ENCODE measurements at regions of chr19 and their contacts with region 1.

Region 1: GRCh38 chr19:38929929-38930775 is at the start of gene SARS2:
- DNase-seq: peak; percentile 93
- ATAC-seq: peak; percentile 71
- H3K4me3 Mint-ChIP-seq: peak within 1 kb of the TSS; percentile 97
- H3K27ac Mint-ChIP-seq: peak within 1 kb of the TSS; percentile 98
- H3K4me1 Mint-ChIP-seq: peaks cover 34% of the 10 kb centered on the region
- H3K27me3 Mint-ChIP-seq: no peaks in the 10 kb centered on the region
- CTCF ChIP-seq: peak; percentile 100
- total RNA-seq, gene SARS2: 46.4 and 50.9 TPM in 2 replicates

Region 2: GRCh38 chr19:38374429-38375176 is 555.5 kb before region 1 on chr19 and contains the start of gene PSMD8:
- CTCF ChIA-PET with region 1: no interaction called
- POLR2A ChIA-PET with region 1: interaction called, 8 read pairs
- intact Hi-C with region 1: loop called (anchors 1 kb)
- DNase-seq: peak; percentile 96
- ATAC-seq: peak; percentile 96
- H3K4me3 Mint-ChIP-seq: peak within 1 kb of the TSS; percentile 100
- H3K27ac Mint-ChIP-seq: peak within 1 kb of the TSS; percentile 96
- H3K4me1 Mint-ChIP-seq: peaks cover 25% of the 10 kb centered on the region
- H3K27me3 Mint-ChIP-seq: no peaks in the 10 kb centered on the region
- CTCF ChIP-seq: no peak
- total RNA-seq, gene PSMD8: 134 and 138 TPM in 2 replicates

Region 3: GRCh38 chr19:38618590-38619360 is 311.4 kb before region 1 on chr19 and contains the start of gene EIF3K:
- CTCF ChIA-PET with region 1: interaction called, 4 read pairs
- POLR2A ChIA-PET with region 1: interaction called, 13 read pairs
- intact Hi-C with region 1: loop called (anchors 1 kb)
- DNase-seq: peak; percentile 97
- ATAC-seq: peak; percentile 28
- H3K4me3 Mint-ChIP-seq: peak within 1 kb of the TSS; percentile 100
- H3K27ac Mint-ChIP-seq: peak within 1 kb of the TSS; percentile 97
- H3K4me1 Mint-ChIP-seq: peaks cover 53% of the 10 kb centered on the region
- H3K27me3 Mint-ChIP-seq: no peaks in the 10 kb centered on the region
- CTCF ChIP-seq: no peak
- total RNA-seq, gene EIF3K: 344 and 385 TPM in 2 replicates

Region 4: DNA sequence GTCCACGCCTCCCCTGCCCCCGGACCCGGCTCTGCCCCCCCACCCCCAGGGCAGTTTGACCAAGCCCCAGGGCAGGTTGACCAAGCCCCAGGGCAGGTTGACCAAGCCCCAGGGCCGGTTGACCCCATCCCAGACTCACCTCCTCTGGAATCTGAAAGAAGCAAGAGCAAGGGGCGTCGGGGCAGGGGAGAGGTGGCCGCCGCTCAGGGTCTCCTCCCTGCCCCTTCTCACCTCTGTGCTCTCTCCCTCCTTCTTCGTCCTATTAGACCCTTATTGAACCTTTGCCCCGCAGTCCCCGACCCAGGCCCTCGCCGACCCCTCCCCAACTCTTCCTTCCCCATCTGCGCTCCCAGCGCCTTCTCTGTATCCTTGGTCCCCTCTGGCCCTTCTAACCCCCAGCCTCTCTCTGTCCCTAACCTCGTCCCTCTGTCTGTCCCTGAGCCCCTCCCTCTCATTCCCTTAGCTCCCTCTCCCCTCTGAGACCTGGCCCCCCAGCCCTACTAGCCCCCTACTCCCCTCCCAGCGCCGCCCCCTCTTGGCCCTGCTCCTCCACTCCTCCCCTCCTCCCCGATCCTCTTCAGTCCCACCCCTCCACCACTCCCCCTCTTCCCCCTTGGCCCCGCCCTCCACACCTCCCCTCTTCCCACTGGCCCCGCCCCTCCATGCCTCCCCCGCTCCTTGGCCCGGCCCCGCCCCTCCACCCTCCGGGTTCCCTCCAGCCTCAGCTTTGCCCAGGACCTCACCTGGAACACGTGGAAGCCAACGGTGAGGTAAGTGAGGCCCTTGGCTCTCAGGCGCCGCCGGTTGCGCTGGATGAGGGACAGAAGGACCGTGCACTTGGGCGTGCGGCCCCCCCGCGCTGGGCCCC is 193.5 kb before region 1 on chr19:
- CTCF ChIA-PET with region 1: interaction called, 25 read pairs
- POLR2A ChIA-PET with region 1: interaction called, 16 read pairs
- intact Hi-C with region 1: loop called (anchors 1 kb)
- DNase-seq: peak; percentile 64
- ATAC-seq: peak; percentile 60
- H3K4me3 Mint-ChIP-seq: peak overlapping the region; percentile 71
- H3K27ac Mint-ChIP-seq: peak overlapping the region; percentile 12
- H3K4me1 Mint-ChIP-seq: peaks cover 38% of the 10 kb centered on the region
- H3K27me3 Mint-ChIP-seq: no peaks in the 10 kb centered on the region
- CTCF ChIP-seq: no peak

Region 5: DNA sequence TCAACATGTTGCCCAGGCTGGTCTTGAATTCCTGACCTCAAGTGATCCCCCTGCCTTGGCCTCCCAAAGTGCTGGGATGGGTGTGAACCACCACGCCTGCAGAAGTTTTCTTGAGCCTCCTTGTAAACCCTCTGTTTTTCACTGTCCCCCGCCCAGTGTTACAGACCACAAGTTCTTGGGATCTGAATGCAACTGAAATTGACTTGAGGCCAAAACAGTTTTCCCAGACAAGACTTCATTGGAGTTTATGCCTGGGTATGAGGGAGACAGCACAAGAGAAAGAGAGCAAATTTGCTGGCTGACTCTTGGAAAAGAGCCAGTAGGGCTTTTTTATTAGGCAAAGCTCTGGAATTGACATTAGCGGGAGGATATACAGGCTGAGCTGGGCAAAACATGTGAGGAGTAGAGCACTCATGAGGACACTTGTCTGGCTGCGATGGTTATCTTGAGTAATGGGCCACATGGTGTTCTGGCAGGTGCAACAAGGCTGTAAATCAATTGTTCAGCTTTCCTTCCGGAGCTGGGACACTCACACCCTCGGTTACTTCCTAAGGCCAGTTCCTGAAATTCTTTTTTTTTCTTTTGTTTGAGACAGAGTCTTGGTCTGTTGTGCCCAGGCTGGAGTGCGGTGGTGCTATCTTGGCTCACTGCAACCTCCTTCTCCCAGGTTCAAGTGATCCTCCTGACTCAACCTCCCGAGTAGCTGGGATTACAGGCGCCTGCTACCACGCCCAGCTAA is 67.7 kb before region 1 on chr19:
- CTCF ChIA-PET with region 1: interaction called, 3 read pairs
- POLR2A ChIA-PET with region 1: interaction called, 12 read pairs
- intact Hi-C with region 1: no loop called
- DNase-seq: no peak
- ATAC-seq: no peak
- H3K4me3 Mint-ChIP-seq: peak overlapping the region; percentile 38
- H3K27ac Mint-ChIP-seq: peak overlapping the region; percentile 75
- H3K4me1 Mint-ChIP-seq: peaks cover 79% of the 10 kb centered on the region
- H3K27me3 Mint-ChIP-seq: no peaks in the 10 kb centered on the region
- CTCF ChIP-seq: no peak

Region 6: DNA sequence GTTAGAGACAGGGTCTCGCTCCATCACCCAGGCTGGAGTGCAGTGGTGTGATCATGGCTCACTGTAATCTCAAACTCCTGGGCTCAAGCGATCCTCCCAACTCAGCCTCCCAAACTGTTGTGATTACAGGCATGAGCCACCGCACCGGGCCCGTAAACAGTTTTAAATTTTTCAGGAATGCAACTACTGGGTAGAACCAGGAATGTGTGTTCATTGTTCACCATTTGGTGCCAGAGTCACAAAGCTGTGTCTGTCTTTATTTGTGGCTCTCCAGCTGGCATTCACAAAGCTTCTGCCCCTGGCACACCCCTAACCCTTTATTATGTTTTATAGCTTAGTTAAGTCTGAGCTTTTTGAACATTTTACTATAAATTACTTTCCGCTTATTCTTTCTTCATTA is 134.3 kb after region 1 on chr19:
- CTCF ChIA-PET with region 1: no interaction called
- POLR2A ChIA-PET with region 1: no interaction called
- intact Hi-C with region 1: no loop called
- DNase-seq: no peak
- ATAC-seq: no peak
- H3K4me3 Mint-ChIP-seq: no peak overlapping the region
- H3K27ac Mint-ChIP-seq: no peak overlapping the region
- H3K4me1 Mint-ChIP-seq: no peaks in the 10 kb centered on the region
- H3K27me3 Mint-ChIP-seq: peaks cover 9% of the 10 kb centered on the region
- CTCF ChIP-seq: no peak

Region 7: DNA sequence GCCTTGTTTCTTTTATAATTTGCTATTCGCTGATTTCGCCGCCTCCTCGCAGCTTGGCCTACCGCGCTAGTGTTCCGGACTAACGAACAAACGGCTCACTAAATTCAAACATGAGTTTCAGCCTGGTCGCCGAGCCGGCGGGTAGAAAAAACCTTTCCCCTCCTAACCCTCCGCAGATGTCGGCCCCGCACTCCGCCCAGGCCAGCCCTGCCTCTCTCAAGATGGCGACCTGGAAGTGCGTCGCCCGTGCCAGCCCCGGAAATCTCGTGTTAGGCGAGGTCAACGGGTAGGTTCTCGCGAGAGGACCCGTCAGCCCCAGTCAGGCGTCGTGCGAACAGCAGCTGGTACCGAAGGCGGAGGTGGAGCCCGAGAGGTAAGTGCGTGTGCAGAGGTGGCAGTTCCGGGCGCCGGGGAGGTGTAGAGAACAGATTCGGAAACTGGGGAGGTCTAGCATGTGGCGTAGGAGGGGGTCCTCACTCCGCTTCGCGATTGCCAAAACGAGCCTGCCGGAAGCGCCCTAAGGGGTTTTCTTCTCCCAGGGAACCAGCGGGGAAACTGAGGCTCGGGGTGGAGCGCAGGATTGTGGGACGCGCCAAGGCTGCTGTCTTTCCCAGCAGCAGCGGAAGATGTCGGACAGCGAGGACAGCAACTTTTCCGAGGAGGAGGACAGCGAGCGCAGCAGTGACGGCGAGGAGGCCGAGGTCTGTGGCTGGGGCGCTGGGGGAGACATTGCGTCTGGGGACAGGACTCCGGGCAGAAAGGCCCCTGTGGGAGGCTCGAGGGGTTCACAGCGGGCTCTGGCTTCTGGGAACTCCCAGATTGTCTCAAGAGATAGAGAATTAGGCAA is 515.3 kb after region 1 on chr19 and contains the start of gene SUPT5H:
- CTCF ChIA-PET with region 1: no interaction called
- POLR2A ChIA-PET with region 1: no interaction called
- intact Hi-C with region 1: loop called (anchors 5 kb)
- DNase-seq: peak; percentile 84
- ATAC-seq: peak; percentile 94
- H3K4me3 Mint-ChIP-seq: peak within 1 kb of the TSS; percentile 96
- H3K27ac Mint-ChIP-seq: peak within 1 kb of the TSS; percentile 93
- H3K4me1 Mint-ChIP-seq: peaks cover 62% of the 10 kb centered on the region
- H3K27me3 Mint-ChIP-seq: no peaks in the 10 kb centered on the region
- CTCF ChIP-seq: no peak
- total RNA-seq, gene SUPT5H: 184 and 200 TPM in 2 replicates

Measured in activated B cell treated with CpG ODN at 0.5 μM for 24 hours (primary cell).